Activated T-helper 1 cell treated with anti-CD3 and anti-CD28 coated beads, Interleukin-12 subunit alpha, Interleukin-12 subunit beta, Interleukin-2, Interleukin-4 antibody, amounts not matched to agents 30 ng/mL and 10 ng/mL and 1 ng/mL, durations not matched to agents 14 hours and 24 hours and 36 hours (primary cell): ENCODE measurements at regions of chr2 and their contacts with region 1.

Region 1: GRCh38 chr2:161327582-161327981 is 19.4 kb downstream of the PSMD14 start:
- DNase-seq: no peak
- H3K4me3 Mint-ChIP-seq: no peak overlapping the region
- H3K27ac Mint-ChIP-seq: no peak overlapping the region
- H3K4me1 Mint-ChIP-seq: peaks cover 20% of the 10 kb centered on the region
- H3K27me3 Mint-ChIP-seq: no peaks in the 10 kb centered on the region

Region 2: DNA sequence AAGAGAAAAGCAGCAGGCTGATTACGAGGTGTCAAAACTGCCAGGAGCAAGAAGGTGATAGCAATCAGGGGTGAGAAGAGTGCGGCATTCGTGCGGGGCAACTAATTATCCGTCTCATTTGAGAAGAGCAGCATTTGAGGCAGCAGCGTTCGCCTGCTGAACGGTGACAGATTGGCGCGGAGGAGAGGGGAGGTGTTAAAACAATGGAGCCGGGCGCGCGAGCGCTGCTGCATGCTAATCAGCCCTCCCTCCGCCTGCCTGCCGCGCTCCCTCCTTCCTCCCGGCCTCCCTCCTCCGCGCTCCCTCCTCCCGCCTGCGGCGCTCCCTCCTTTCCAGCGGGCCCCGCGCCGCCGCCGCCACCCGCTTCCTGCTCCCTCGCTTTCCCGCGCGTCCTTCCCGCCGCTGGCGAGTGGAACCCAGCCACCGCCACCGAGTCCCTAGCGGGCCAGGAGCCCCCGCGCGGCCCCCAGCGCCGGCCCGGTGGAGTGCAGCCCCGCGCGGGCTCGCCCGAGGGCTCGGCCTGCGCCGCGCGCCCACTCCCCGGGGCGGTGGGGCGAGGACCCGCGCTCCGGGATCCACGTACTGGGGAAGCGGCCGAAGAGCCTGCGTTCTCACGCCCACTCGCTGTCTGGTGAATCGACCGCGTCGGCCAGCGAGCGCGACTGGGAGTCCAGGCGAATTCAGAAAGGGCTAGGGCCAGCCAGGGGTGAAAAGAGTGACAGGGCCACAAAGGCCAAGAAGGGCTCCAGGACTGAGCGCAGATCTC is 88.8 kb before region 1 on chr2:
- intact Hi-C with region 1: no loop called
- DNase-seq: peak; percentile 47
- H3K4me3 Mint-ChIP-seq: peak overlapping the region; percentile 83
- H3K27ac Mint-ChIP-seq: peak overlapping the region; percentile 73
- H3K4me1 Mint-ChIP-seq: peaks cover 58% of the 10 kb centered on the region
- H3K27me3 Mint-ChIP-seq: no peaks in the 10 kb centered on the region

Region 3: GRCh38 chr2:161369311-161369710 is 41.7 kb after region 1 on chr2:
- intact Hi-C with region 1: loop called (anchors 5 kb)
- DNase-seq: no peak
- H3K4me3 Mint-ChIP-seq: no peak overlapping the region
- H3K27ac Mint-ChIP-seq: no peak overlapping the region
- H3K4me1 Mint-ChIP-seq: peaks cover 4% of the 10 kb centered on the region
- H3K27me3 Mint-ChIP-seq: no peaks in the 10 kb centered on the region

Region 4: DNA sequence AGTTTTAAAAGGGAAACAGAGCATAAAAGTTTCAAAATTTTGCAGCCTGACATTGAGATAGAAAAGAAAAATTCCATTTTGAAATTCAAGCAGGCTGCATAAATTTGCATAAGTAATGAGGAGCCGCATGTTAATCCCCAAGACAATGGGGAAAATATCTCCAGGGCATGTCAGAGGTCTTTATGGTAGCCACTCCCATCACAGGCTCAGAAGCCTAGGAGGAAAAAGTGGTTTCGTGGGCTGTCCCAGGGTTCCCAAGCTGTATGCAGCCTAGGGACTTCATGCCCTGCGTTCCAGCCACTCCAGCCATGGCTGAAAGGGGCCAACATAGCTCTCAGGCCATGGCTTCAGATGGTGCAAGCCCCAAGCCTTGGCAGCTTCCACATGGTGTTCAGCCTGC is 405.4 kb after region 1 on chr2:
- intact Hi-C with region 1: no loop called
- DNase-seq: no peak
- H3K4me3 Mint-ChIP-seq: no peak overlapping the region
- H3K27ac Mint-ChIP-seq: no peak overlapping the region
- H3K4me1 Mint-ChIP-seq: no peaks in the 10 kb centered on the region
- H3K27me3 Mint-ChIP-seq: peaks cover 13% of the 10 kb centered on the region